Ascending aorta (tissue), 2 donors: ENCODE measurements at regions of chr9 and their contacts with region 1.

Region 1: GRCh38 chr9:137578518-137579258 is at the start of gene DPH7:
- DNase-seq: peak; percentile 63 to 97
- H3K4me3 ChIP-seq: peak within 1 kb of the TSS; percentile 88 to 92
- H3K27ac ChIP-seq: peak within 1 kb of the TSS; percentile 70 to 78
- H3K4me1 ChIP-seq: peaks cover 0 to 18% of the 10 kb centered on the region in 2 donors
- H3K27me3 ChIP-seq: no peaks in the 10 kb centered on the region
- CTCF ChIP-seq: peak; percentile 89 to 95 (median 93)
- total RNA-seq, gene DPH7: 57.2 TPM

Region 2: DNA sequence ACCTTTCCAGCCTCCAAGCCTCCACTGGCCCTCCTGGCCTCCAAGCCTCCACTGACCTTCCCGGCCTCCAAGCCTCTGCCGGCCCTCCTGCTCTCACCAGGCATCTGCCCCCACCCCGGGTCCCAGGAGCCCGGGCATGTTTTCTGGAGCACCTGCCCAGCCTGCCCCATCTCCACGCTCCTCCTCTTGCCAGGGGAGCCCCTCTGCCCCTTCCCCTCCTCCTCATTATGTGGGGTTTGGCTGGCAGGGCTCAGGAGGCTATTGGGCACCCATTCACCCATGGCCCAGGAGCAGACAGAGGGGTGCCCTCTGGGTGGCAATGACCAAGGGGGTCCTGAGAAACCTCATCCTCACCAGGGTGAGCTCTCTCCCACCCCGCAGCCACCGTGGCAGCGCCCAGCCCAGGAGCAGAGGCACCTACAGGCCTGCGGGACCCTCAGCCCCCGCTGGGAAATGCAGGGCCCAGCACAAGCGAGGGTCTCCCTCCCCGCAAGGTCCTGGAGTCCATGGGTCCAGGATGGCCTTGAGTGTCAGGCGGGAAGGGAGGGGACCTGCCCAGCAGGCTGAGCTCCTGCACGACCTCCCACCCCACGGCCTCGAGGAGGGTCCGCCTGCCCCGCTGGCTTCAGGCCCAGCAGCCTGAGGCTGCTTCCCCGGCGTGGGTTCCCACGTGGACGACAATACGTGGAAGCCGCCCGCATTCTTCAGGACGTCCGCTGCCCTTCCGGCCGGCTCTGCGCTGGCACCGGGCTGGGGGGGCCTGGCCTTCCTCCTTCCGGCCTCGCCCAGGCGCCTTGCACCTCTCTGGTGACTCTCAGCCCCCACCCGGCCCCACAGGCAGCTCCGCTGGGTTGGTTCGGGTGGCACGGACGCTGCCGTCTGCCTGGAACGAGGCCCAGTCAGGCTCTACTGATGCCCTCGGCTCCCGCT is 225.2 kb before region 1 on chr9:
- intact Hi-C with region 1: no loop called
- DNase-seq: peak in 1 of 2 donors; percentile 61
- H3K4me3 ChIP-seq: no peak overlapping the region
- H3K27ac ChIP-seq: no peak overlapping the region
- H3K4me1 ChIP-seq: no peaks in the 10 kb centered on the region
- H3K27me3 ChIP-seq: no peaks in the 10 kb centered on the region
- CTCF ChIP-seq: no peak

Region 3: GRCh38 chr9:137534256-137535117 is 44.2 kb before region 1 on chr9:
- intact Hi-C with region 1: no loop called
- DNase-seq: no peak
- H3K4me3 ChIP-seq: no peak overlapping the region
- H3K27ac ChIP-seq: no peak overlapping the region
- H3K4me1 ChIP-seq: peaks cover 0 to 2% of the 10 kb centered on the region in 2 donors
- H3K27me3 ChIP-seq: no peaks in the 10 kb centered on the region
- CTCF ChIP-seq: peak in 2 of 3 experiments; percentile 50 to 67

Region 4: DNA sequence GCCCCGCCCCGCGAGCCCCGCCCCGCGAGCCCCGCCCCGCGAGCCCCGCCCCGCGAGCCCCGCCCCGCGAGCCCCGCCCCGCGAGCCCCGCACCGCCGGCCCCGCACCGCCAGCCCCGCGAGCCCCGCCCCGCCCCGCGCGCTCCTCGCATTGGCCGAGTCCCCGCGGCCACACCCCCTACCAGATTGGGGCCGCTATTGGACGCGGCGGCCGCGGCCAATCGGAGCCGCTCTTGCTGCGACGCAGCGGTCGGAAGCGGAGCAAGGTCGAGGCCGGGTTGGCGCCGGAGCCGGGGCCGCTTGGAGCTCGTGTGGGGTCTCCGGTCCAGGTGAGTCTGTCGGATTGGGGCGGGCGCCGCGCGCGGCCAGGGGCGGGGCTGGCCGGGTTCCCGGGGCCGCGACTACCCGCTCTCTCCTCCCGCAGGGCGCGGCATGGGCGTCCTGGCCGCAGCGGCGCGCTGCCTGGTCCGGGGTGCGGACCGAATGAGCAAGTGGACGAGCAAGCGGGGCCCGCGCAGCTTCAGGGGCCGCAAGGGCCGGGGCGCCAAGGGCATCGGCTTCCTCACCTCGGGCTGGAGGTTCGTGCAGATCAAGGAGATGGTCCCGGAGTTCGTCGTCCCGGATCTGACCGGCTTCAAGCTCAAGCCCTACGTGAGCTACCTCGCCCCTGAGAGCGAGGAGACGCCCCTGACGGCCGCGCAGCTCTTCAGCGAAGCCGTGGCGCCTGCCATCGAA is 26.9 kb before region 1 on chr9 and contains the start of gene MRPL41:
- intact Hi-C with region 1: loop called (anchors 1 kb)
- DNase-seq: peak; percentile 56 to 94
- H3K4me3 ChIP-seq: peak within 1 kb of the TSS; percentile 79 to 91
- H3K27ac ChIP-seq: peak within 1 kb of the TSS; percentile 88 to 96
- H3K4me1 ChIP-seq: peaks cover 3 to 18% of the 10 kb centered on the region in 2 donors
- H3K27me3 ChIP-seq: no peaks in the 10 kb centered on the region
- CTCF ChIP-seq: no peak
- total RNA-seq, gene MRPL41: 121 TPM

Region 5: DNA sequence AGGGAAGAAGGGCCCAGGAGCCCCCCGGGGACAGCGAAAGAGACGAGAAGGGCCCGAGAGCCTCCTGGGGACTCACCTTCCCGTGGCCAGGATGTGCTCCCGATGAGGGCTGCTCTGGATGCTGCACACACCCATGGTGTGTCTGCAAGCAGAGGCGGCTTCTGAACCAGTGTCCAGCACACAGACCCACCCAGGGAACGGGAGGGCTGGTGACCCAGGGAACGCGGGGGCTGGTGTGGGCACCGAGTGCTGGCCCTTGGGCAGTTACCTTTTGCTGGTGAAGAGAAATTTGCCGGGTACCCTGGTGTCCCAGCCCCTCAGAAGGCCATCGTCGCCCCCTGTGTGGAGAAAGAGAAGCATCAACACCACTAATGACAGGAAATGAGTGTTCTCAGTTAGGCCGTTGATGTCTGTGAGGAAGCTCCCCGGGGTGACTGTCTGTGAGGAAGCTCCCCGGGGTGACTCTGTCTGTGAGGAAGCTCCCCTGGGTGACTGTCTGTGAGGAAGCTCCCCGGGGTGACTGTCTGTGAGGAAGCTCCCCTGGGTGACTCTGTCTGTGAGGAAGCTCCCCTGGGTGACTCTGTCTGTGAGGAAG is 13.8 kb before region 1 on chr9:
- intact Hi-C with region 1: no loop called
- DNase-seq: no peak
- H3K4me3 ChIP-seq: no peak overlapping the region
- H3K27ac ChIP-seq: no peak overlapping the region
- H3K4me1 ChIP-seq: no peaks in the 10 kb centered on the region
- H3K27me3 ChIP-seq: no peaks in the 10 kb centered on the region
- CTCF ChIP-seq: no peak

Region 6: DNA sequence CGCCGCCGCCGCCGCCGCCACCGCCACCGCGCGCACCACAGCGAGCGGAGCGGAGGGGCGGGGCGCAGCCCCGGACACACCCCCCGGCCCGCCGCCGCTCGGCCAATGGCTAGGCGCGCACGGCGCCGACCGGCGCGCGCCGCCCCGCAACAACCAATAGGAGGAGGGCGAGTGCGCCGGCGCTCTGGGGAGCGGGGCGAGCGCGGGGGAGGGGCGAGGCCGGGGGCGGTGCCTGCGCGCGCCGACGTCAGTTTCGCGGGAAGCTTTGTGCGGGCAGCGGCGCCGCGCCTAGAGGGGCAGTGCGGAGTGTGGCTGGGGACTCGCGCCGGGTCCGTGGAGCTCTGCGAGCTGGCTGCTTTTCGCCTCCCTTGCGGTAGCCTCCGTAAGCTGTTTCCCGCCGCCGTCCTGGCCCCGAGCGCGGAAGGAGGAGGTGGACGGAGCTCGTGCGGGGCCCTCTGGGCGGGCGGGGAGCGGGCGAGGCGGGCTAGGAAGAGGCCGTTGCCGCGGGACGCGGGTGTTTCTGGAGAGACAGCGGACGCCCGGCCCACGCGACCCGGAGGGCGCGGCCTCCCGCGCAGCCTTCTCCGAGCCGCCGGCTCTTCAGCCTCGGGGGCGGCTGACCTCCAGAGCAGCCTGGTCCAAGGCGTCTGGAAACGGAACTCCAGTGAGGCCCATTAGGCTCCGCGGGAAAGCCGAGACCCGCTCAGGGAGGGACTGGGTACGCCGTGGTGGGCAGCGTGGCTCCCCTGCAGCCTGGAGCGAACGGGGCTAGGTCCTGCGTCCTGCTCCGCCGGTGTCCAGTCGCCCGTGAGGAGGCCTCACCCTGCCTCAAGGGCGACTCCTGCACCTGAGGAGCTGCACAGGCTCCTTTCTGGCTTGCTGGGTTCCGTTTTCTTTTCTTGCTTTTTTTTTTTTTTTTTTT is 12.0 kb after region 1 on chr9 and contains the start of gene ZMYND19:
- intact Hi-C with region 1: loop called (anchors 1 kb)
- DNase-seq: peak; percentile 46 to 93
- H3K4me3 ChIP-seq: peak within 1 kb of the TSS; percentile 76 to 97
- H3K27ac ChIP-seq: peak within 1 kb of the TSS; percentile 43 to 60
- H3K4me1 ChIP-seq: peaks cover 7 to 14% of the 10 kb centered on the region in 2 donors
- H3K27me3 ChIP-seq: no peaks in the 10 kb centered on the region
- CTCF ChIP-seq: no peak
- total RNA-seq, gene ZMYND19: 4.3 TPM

Region 7: GRCh38 chr9:137618105-137619067 is 39.7 kb after region 1 on chr9 and contains the start of gene EHMT1:
- intact Hi-C with region 1: loop called (anchors 2 kb)
- DNase-seq: peak; percentile 41 to 89
- H3K4me3 ChIP-seq: peak within 1 kb of the TSS; percentile 79 to 80
- H3K27ac ChIP-seq: peak within 1 kb of the TSS; percentile 83 to 97
- H3K4me1 ChIP-seq: peaks cover 7 to 28% of the 10 kb centered on the region in 2 donors
- H3K27me3 ChIP-seq: no peaks in the 10 kb centered on the region
- CTCF ChIP-seq: no peak
- total RNA-seq, gene EHMT1: 49.9 TPM

Region 8: DNA sequence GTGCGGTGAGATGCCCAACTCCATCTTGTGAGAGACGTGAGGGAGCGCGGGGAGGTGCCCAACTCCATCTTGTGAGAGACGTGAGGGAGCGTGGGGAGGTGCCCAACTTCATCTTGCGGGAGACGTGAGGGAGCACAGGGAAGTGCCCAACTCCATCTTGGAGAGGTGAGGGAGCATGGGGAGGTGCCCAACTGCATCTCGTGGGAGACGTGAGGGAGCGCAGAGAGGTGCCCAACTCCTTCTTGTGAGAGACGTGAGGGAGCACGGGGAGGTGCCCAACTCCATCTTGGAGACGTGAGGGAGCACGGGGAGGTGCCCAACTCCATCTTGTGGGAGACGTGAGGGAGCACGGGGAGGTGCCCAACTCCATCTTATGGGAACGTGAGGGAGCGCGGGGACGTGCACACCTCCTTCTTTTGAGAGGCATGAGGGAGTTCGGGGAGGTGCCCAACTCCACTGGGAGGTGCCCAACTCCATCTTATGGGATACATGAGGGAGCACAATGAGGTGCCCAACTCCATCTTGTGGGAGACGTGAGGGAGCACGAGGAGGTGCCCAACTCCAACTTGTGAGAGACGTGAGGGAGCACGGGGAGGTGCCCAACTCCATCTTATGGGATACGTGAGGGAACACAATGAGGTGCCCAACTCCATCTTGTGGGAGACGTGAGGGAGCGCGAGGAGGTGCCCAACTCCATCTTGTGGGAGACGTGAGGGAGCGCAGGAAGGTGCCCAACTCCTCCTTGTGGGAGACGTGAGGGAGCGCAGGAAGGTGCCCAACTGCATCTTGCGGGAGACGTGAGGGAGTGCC is 534.3 kb after region 1 on chr9:
- intact Hi-C with region 1: no loop called
- DNase-seq: peak in 1 of 2 donors; percentile 38
- H3K4me3 ChIP-seq: no peak overlapping the region
- H3K27ac ChIP-seq: no peak overlapping the region
- H3K4me1 ChIP-seq: no peaks in the 10 kb centered on the region
- H3K27me3 ChIP-seq: no peaks in the 10 kb centered on the region
- CTCF ChIP-seq: no peak